GM12878 (cell line): ENCODE measurements at regions of chr2 and their contacts with region 1.

Region 1: GRCh38 chr2:159695795-159696448 is 16.4 kb upstream of the MARCHF7 start:
- DNase-seq: no peak
- ATAC-seq: peak; percentile 55
- H3K4me3 ChIP-seq: no peak overlapping the region
- H3K27ac ChIP-seq: no peak overlapping the region
- H3K4me1 ChIP-seq: peaks cover 3% of the 10 kb centered on the region
- H3K27me3 ChIP-seq: no peaks in the 10 kb centered on the region
- CTCF ChIP-seq: no peak
- EP300 ChIP-seq: no peak
- POLR2A ChIP-seq: no peak
- RAD21 ChIP-seq: no peak

Region 2: GRCh38 chr2:159677654-159678053 is 18.3 kb before region 1 on chr2:
- CTCF ChIA-PET with region 1: interaction called, 4 read pairs
- POLR2A ChIA-PET with region 1: interaction called, 10 read pairs
- RAD21 ChIA-PET with region 1: no interaction called
- SMC1A ChIA-PET with region 1: interaction called, 3 read pairs
- in situ Hi-C with region 1: no loop called
- intact Hi-C with region 1: no loop called
- DNase-seq: no peak
- ATAC-seq: no peak
- H3K4me3 ChIP-seq: no peak overlapping the region
- H3K27ac ChIP-seq: no peak overlapping the region
- H3K4me1 ChIP-seq: no peaks in the 10 kb centered on the region
- H3K27me3 ChIP-seq: no peaks in the 10 kb centered on the region
- CTCF ChIP-seq: peak in 1 of 3 experiments; percentile 16; a peak in 2 of 6 replicates
- EP300 ChIP-seq: no peak
- POLR2A ChIP-seq: no peak
- RAD21 ChIP-seq: peak; percentile 29; the same call in 1 of the 2 replicates